ENCODE measurements at regions of chr9 and their contacts with region 1.

Region 1: GRCh38 chr9:84781458-84781857 is 111.9 kb downstream of the NTRK2 start:
- DNase-seq: no peak
- ATAC-seq: peak; percentile 71
- H3K4me3 ChIP-seq: no peak overlapping the region
- H3K27ac ChIP-seq: no peak overlapping the region
- H3K4me1 ChIP-seq: peaks cover 20% of the 10 kb centered on the region
- H3K27me3 ChIP-seq: no peaks in the 10 kb centered on the region
- CTCF ChIP-seq: peak; percentile 48 to 63 (median 52)
- EP300 ChIP-seq: no peak
- POLR2A ChIP-seq: no peak
- RAD21 ChIP-seq: peak; percentile 86

Region 2: GRCh38 chr9:84397151-84397728 is 384.2 kb before region 1 on chr9:
- CTCF ChIA-PET with region 1: interaction called, 20 read pairs
- POLR2A ChIA-PET with region 1: no interaction called
- RAD21 ChIA-PET with region 1: interaction called, 10 read pairs
- SMC1A ChIA-PET with region 1: interaction called, 13 read pairs
- in situ Hi-C with region 1: loop called (anchors 5 kb)
- intact Hi-C with region 1: loop called (anchors 5 kb)
- DNase-seq: peak; percentile 8
- ATAC-seq: peak; percentile 96
- H3K4me3 ChIP-seq: no peak overlapping the region
- H3K27ac ChIP-seq: no peak overlapping the region
- H3K4me1 ChIP-seq: no peaks in the 10 kb centered on the region
- H3K27me3 ChIP-seq: peaks cover 0 to 2% of the 10 kb centered on the region in 2 experiments; a peak in 1 of 4 replicates
- CTCF ChIP-seq: peak; percentile 77 to 91 (median 80)
- EP300 ChIP-seq: no peak
- POLR2A ChIP-seq: no peak
- RAD21 ChIP-seq: peak; percentile 87

Region 3: DNA sequence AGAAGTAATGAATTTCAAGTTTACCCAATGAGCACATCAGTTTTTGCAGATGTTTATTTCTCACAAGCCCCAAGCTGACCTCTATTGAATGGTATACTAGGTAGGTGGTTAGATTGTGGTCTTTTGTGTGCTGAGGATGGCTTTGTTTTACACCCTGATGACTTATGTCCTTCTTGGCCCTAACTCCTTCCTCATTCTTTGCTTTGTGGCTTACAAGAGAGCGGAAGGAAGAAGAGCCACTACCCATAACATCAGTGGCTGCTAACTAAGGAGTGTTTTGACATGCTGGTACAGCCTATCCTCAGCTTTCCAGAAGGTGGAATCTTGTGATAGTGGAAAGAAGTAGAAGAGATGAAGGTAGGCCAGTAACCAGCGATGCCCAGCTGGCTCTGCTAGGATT is 197.6 kb before region 1 on chr9:
- CTCF ChIA-PET with region 1: no interaction called
- POLR2A ChIA-PET with region 1: no interaction called
- RAD21 ChIA-PET with region 1: no interaction called
- SMC1A ChIA-PET with region 1: no interaction called
- in situ Hi-C with region 1: no loop called
- intact Hi-C with region 1: no loop called
- DNase-seq: no peak
- ATAC-seq: no peak
- H3K4me3 ChIP-seq: no peak overlapping the region
- H3K27ac ChIP-seq: no peak overlapping the region
- H3K4me1 ChIP-seq: no peaks in the 10 kb centered on the region
- H3K27me3 ChIP-seq: peaks cover 2 to 7% of the 10 kb centered on the region in 2 experiments; a peak in 3 of 4 replicates
- CTCF ChIP-seq: no peak
- EP300 ChIP-seq: no peak
- POLR2A ChIP-seq: no peak
- RAD21 ChIP-seq: no peak

Region 4: DNA sequence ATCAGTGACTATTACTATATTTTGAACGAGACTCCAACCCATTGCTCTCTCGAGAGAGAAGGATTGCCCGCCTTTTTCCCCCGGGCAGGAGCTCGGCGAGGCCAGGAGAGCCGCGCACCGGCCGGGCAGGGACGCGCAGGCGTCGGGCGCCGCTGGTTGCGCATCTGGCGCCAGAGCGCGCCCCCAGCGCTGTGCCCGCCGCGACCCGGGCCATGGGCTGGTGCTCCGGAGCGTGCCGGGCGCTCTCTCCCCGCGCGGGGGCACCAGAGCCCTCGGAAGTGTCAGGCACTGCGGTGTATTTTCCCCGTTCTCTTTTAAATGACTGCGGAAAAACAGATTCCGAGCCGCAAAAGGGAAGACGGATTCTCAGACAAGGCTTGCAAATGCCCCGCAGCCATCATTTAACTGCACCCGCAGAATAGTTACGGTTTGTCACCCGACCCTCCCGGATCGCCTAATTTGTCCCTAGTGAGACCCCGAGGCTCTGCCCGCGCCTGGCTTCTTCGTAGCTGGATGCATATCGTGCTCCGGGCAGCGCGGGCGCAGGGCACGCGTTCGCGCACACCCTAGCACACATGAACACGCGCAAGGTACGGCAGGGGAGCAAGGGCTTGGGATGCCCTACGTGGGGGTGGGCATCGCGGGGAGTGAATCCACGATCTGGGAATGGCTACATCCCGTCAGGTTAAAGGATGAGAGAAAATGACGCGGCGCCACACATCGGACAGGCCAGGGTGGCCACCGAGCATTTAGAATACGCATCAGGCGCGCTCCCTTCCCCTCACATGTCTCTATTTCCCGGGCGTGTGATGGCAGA is 113.1 kb before region 1 on chr9:
- CTCF ChIA-PET with region 1: interaction called, 11 read pairs
- POLR2A ChIA-PET with region 1: no interaction called
- RAD21 ChIA-PET with region 1: interaction called, 5 read pairs
- SMC1A ChIA-PET with region 1: interaction called, 6 read pairs
- in situ Hi-C with region 1: no loop called
- intact Hi-C with region 1: loop called (anchors 10 kb)
- DNase-seq: no peak
- ATAC-seq: peak; percentile 95
- H3K4me3 ChIP-seq: peak overlapping the region; percentile 56
- H3K27ac ChIP-seq: no peak overlapping the region
- H3K4me1 ChIP-seq: peaks cover 4% of the 10 kb centered on the region; the same call in 1 of the 2 replicates
- H3K27me3 ChIP-seq: peaks cover 5 to 11% of the 10 kb centered on the region in 2 experiments; a peak in 3 of 4 replicates
- CTCF ChIP-seq: peak; percentile 59 to 65 (median 61); a peak in 5 of 6 replicates
- EP300 ChIP-seq: no peak
- POLR2A ChIP-seq: no peak
- RAD21 ChIP-seq: peak; percentile 45

Region 5: GRCh38 chr9:84711902-84712301 is 69.6 kb before region 1 on chr9:
- CTCF ChIA-PET with region 1: interaction called, 34 read pairs
- POLR2A ChIA-PET with region 1: interaction called, 11 read pairs
- RAD21 ChIA-PET with region 1: interaction called, 21 read pairs
- SMC1A ChIA-PET with region 1: interaction called, 64 read pairs
- in situ Hi-C with region 1: no loop called
- intact Hi-C with region 1: no loop called
- DNase-seq: no peak
- ATAC-seq: peak; percentile 51
- H3K4me3 ChIP-seq: no peak overlapping the region
- H3K27ac ChIP-seq: no peak overlapping the region
- H3K4me1 ChIP-seq: peaks cover 11% of the 10 kb centered on the region; the same call in 1 of the 2 replicates
- H3K27me3 ChIP-seq: no peaks in the 10 kb centered on the region
- CTCF ChIP-seq: no peak
- EP300 ChIP-seq: no peak; a peak in 1 of 4 replicates
- POLR2A ChIP-seq: no peak
- RAD21 ChIP-seq: no peak

Region 6: DNA sequence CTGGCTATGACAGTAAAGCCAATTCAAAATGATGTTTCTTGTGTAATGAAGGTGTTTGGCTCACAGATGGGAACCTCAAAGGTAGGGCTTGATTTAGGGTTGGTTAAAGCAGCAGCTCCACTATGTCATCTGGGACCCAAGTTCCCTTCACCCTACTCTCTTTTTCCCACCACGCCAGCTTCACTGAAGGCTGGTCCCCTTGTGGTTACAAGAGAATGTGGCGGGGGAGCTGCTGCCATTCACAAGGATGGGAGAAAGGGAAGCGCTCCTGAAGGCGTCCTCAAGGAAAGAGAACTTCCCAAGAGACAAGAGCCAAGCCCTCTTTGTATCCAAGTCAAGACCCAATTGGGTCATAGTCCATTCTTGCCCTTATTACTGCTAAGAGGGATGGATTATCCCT is 39.2 kb before region 1 on chr9:
- CTCF ChIA-PET with region 1: interaction called, 14 read pairs
- POLR2A ChIA-PET with region 1: interaction called, 4 read pairs
- RAD21 ChIA-PET with region 1: interaction called, 10 read pairs
- SMC1A ChIA-PET with region 1: interaction called, 19 read pairs
- in situ Hi-C with region 1: no loop called
- intact Hi-C with region 1: loop called (anchors 5 kb)
- DNase-seq: no peak
- ATAC-seq: no peak
- H3K4me3 ChIP-seq: no peak overlapping the region
- H3K27ac ChIP-seq: no peak overlapping the region
- H3K4me1 ChIP-seq: peaks cover 11% of the 10 kb centered on the region
- H3K27me3 ChIP-seq: no peaks in the 10 kb centered on the region
- CTCF ChIP-seq: no peak
- EP300 ChIP-seq: no peak
- POLR2A ChIP-seq: no peak
- RAD21 ChIP-seq: no peak

Region 7: DNA sequence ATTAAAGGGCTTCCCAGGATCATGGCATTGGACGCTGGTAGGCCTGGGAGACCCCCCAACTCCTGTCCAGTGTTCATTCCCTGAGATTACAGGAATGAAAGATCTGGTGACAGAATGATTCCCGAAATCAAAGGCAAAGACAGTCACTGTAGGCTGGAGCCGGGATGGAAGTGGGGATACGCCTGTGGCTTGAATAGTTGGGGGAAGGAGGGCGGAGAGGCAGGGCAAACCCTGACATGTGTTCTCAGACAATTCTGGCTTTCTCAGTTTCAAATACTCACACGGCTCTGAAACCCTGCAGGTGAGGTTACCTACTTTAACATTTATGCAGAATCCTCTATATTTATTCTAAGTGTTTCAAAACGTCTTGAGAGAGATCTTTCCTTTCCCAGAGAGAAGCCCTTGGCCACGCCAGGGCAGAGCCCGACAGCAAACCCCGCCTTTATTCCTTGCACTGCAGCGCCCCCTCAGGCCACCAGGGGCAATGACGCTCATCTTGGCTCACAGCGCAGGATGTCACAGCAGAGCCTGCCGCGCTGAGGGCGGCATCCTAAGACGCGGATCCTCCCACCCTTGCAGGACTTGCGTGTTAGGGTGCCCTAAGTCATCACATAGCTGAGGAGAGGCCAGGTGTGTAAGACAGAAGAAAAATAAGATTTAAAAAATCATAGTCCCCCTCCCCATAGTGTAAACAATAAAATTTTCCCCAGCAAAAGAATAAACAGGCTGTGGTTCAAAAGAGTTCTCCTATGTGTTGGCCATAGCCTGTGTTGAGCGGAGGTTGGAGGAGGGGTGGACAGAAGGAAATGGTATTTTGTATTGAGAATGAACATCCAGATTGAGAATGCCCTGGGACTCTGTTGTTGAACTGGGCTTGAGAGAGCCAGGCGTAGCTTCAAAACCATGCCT is 172.6 kb after region 1 on chr9:
- CTCF ChIA-PET with region 1: interaction called, 5 read pairs
- POLR2A ChIA-PET with region 1: no interaction called
- RAD21 ChIA-PET with region 1: no interaction called
- SMC1A ChIA-PET with region 1: interaction called, 8 read pairs
- in situ Hi-C with region 1: no loop called
- intact Hi-C with region 1: loop called (anchors 5 kb)
- DNase-seq: no peak
- ATAC-seq: peak; percentile 99
- H3K4me3 ChIP-seq: no peak overlapping the region
- H3K27ac ChIP-seq: no peak overlapping the region
- H3K4me1 ChIP-seq: no peaks in the 10 kb centered on the region
- H3K27me3 ChIP-seq: no peaks in the 10 kb centered on the region
- CTCF ChIP-seq: peak; percentile 93 to 95 (median 94)
- EP300 ChIP-seq: no peak
- POLR2A ChIP-seq: no peak
- RAD21 ChIP-seq: peak; percentile 83